CD4-positive, alpha-beta T cell (primary cell): ENCODE measurements at regions of chr20 and their contacts with region 1.

Region 1: DNA sequence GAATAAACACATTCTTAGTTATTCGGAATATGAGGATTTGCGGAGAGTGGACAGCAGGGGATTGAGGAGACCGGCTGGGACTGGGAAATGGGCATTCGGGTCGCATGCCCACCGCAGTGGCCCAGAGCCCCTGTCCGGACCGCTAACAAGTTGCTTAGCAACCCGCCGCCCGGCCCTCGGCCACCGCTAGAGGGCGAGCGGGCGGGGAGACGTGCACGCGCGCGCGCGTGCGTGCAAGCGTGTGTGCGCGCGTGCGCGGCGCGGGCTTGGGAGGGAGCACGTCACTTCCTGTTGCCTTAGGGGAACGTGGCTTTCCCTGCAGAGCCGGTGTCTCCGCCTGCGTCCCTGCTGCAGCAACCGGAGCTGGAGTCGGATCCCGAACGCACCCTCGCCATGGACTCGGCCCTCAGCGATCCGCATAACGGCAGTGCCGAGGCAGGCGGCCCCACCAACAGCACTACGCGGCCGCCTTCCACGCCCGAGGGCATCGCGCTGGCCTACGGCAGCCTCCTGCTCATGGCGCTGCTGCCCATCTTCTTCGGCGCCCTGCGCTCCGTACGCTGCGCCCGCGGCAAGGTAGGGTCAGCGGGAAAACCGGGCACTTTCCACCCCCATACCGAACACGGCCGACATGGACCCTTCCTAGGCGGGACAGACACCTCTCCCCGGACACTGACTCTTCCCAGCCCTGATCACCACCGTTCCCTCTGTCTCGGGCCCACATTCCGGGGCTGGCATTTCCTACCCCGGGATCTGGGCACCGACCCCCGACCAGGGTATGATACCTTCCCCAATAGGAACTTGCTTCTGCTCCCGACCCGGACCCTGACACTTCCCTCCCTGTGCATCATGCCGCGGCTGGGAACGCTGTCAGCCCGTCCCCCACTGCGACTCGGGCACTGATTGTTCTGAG is at the start of gene HM13:
- DNase-seq: peak; percentile 81 to 96 (median 86)
- ATAC-seq: peak; percentile 82
- H3K4me3 ChIP-seq: peak within 1 kb of the TSS; percentile 99
- H3K4me3 Mint-ChIP-seq: no peak within 1 kb of the TSS
- H3K27ac ChIP-seq: peak within 1 kb of the TSS; percentile 37 to 69
- H3K27ac Mint-ChIP-seq: no peak within 1 kb of the TSS
- H3K4me1 ChIP-seq: peaks cover 46% of the 10 kb centered on the region
- H3K4me1 Mint-ChIP-seq: peaks cover 7% of the 10 kb centered on the region
- H3K27me3 ChIP-seq: no peaks in the 10 kb centered on the region
- H3K27me3 Mint-ChIP-seq: no peaks in the 10 kb centered on the region
- CTCF ChIP-seq: peak; percentile 95
- total RNA-seq, gene HM13: 97.8 to 113 TPM

Region 2: DNA sequence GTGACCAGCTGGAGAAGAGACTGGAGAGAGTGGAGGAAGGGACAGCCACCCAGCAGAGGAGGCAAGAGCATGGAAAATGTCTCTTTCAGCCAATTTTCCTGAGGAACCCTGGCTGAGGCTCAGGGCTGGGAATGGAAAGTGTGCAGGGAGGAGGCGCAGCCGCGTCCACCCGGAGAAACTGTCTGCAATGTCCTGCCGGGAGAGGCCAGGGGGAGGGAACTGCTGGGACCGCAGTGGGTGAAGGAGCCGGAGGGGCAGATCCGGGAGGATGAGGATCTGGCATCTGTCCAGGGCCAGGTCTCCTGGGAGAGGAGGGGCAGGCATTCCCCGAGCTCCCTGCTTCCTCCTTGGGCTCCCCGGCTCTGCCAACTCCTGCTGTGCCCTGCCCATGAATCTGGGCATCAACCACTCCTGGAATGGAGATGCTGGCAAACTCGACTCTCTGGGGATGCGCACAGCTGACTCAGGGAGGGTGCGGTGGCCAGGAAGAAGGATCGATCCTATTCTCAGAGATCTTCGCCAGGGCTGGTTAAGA is 17.6 kb before region 1 on chr20:
- CTCF ChIA-PET with region 1: interaction called, 30 read pairs
- POLR2A ChIA-PET with region 1: no interaction called
- intact Hi-C with region 1: no loop called
- DNase-seq: no peak
- ATAC-seq: no peak
- H3K4me3 ChIP-seq: no peak overlapping the region
- H3K4me3 Mint-ChIP-seq: no peak overlapping the region
- H3K27ac ChIP-seq: no peak overlapping the region
- H3K27ac Mint-ChIP-seq: no peak overlapping the region
- H3K4me1 ChIP-seq: no peaks in the 10 kb centered on the region
- H3K4me1 Mint-ChIP-seq: no peaks in the 10 kb centered on the region
- H3K27me3 ChIP-seq: peaks cover 0 to 7% of the 10 kb centered on the region in 2 experiments
- H3K27me3 Mint-ChIP-seq: peaks cover 31% of the 10 kb centered on the region
- CTCF ChIP-seq: no peak

Region 3: GRCh38 chr20:31547017-31547675 is 32.7 kb after region 1 on chr20:
- CTCF ChIA-PET with region 1: no interaction called
- POLR2A ChIA-PET with region 1: no interaction called
- intact Hi-C with region 1: loop called in 1 of 2 experiments (anchors 5 kb)
- DNase-seq: peak; percentile 61 to 93 (median 74)
- ATAC-seq: peak; percentile 82
- H3K4me3 ChIP-seq: peak overlapping the region; percentile 64
- H3K4me3 Mint-ChIP-seq: peak overlapping the region; percentile 94
- H3K27ac ChIP-seq: peak overlapping the region; percentile 71 to 93
- H3K27ac Mint-ChIP-seq: peak overlapping the region; percentile 99
- H3K4me1 ChIP-seq: peaks cover 23% of the 10 kb centered on the region
- H3K4me1 Mint-ChIP-seq: peaks cover 23% of the 10 kb centered on the region
- H3K27me3 ChIP-seq: no peaks in the 10 kb centered on the region
- H3K27me3 Mint-ChIP-seq: no peaks in the 10 kb centered on the region
- CTCF ChIP-seq: no peak